HEK293T (cell line): ENCODE measurements at regions of chr20 and their contacts with region 1.

Region 1: DNA sequence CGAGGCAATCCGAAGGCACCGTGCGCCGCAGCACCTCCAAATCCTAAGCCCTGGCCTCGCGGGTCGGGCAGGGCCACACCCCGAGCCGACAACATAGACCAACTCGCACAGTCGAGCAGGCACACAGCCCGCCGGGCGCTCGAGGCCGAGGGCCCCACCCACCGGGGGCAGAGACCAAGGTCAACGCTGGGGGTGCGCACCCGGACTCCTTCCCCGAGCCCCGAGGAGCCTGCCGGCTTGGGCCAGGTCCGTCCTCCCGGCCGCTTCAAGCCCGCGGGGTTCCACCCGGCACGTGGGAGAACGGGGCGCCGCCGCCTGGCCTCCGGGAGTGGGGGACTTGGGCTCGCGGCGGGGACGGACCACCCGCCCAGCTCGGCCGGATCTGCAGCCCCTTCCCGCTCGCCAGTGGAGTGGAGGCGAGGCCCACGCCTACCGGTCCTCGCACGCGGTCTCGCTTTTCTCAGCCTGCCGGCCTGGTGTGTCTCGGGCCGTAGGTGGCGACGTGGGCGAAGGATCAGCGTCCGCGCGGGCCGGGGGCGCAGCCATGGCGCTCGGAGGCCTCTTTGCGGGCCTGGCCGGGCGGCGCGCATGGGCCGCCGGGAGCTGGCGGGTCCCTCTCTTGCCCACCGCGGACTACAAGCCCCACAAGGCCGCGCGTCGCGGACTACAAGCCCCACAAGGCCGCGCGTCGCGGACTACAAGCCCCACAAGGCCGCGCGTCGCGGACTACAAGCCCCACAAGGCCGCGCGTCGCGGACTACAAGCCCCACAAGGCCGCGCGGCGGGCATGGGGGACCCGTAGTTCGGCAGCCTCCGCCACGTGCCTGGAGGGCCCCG is at the start of gene UCKL1:
- DNase-seq: peak; percentile 87

Region 2: DNA sequence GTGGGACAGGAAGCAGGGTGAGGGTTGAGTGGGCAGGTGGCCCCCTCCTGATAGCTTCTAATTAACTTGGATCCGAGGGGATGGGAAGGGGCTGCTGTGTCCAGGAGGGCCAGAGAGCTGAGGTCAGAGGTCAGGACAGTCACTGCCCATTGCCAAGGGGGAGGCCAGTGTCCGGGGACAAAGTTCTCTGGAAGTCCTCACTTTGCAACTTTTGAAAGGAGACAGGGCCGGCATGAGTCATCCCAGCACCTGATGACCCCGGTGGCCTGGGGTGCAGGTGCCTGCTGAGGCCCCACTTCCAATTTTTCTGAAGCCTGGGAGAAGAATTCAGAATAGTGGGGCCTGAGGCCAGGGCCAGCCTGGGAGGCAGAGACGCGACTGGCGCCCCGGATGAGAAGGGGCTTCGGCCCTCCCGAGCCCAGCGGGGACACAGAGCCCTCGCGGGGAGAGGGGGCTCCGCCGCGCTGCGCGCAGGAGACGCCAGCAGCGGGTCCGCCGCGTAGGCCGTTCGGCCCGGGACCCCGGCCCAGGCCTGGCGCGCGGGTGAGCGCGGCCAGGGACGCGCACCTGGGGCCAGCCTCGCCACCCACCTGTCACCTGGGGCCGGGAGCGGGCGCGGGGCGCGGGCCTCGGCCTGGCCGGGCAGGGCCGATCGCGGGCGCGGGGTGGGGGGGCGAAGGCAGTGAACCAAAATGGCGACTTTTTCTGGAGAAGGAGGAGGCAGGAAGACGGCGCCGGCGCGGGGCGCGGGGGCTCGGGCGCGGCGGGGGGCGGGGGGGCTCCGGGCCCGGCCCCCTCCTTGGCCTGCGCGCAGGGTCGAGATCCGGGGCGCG is 13.1 kb after region 1 on chr20:
- CTCF ChIA-PET with region 1: interaction called, 4 read pairs
- POLR2A ChIA-PET with region 1: interaction called, 27 read pairs
- DNase-seq: peak; percentile 41

Region 3: DNA sequence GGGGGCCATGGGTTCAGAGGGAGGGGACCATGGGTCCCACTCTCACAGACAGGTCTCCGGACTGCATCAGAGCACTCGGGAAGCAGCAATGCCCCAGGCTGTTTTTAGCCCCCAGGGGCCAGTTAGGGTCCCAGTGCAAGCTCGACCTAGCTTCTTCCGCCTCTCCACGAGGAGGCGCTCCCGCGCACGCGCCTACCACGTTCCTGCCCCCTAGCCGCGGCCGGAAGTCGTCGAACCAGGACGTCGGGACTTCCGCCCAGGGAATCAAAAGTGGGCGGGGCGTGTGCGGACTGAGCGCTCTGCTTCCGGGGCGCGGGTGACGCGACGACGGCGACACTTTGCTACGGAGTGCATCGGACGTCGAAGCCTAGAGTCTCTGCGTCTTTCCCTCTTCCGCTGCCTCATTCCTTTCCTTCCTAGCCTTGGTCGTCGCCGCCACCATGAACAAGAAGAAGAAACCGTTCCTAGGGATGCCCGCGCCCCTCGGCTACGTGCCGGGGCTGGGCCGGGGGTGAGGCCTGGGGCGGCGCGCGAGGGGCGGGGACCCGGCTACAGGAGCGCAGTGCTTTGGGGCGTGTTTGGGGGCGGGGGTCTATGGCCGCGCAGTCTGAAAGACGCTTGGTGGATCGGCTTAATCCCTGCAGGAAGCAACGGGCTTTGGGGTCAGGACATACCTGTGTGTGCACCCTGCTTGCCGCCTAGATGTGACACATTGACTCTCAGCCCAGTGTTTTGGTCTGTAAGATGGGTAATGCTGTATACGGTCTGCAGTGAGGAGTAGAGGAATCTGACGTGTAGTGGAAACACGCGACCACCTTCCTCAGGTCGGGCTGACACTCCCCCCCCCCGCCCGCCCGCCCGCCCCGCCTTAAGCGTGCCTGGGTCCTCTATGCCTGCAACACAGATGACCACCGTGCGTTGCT is 25.0 kb after region 1 on chr20 and contains the start of gene PRPF6:
- CTCF ChIA-PET with region 1: interaction called, 3 read pairs
- POLR2A ChIA-PET with region 1: interaction called, 13 read pairs
- DNase-seq: peak; percentile 98